CD8-positive, alpha-beta T cell (primary cell): ENCODE measurements at regions of chr4 and their contacts with region 1.

Region 1: DNA sequence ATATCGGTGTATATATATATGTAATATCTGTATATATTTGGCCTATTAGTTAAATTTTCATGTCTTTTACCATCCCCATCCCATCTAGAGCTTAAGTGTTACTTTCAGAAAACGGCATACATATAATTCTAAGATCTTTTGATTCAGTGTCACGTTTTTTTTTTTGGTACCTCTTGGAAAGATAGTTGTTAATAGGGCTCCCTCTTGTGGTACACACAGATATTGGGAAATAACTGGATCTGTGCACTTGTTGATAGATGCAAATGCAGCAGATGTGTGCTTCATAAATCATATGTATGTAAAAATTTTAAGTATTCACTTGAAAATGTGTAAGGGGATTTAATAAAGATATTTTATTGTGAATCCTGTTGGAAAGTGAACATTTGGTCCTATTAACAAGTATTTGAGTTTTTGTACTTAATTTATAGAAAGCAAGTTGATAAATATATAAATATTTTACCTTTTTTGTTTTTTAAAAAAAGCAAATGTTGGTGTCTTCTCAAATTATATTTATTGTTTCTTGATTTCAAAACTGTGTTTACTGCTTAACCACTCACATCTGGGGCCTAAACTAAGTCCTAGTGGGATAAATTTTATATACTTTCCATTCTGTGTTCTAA is 74.7 kb downstream of the PAQR3 start:
- DNase-seq: peak in 3 of 9 experiments; percentile 29 to 78 (median 68)
- ATAC-seq: peak; percentile 73
- H3K4me3 ChIP-seq: no peak overlapping the region
- H3K4me3 Mint-ChIP-seq: no peak overlapping the region
- H3K27ac ChIP-seq: no peak overlapping the region
- H3K27ac Mint-ChIP-seq: no peak overlapping the region
- H3K4me1 ChIP-seq: no peaks in the 10 kb centered on the region
- H3K4me1 Mint-ChIP-seq: peaks cover 2% of the 10 kb centered on the region
- H3K27me3 ChIP-seq: no peaks in the 10 kb centered on the region
- H3K27me3 Mint-ChIP-seq: no peaks in the 10 kb centered on the region
- CTCF ChIP-seq: peak; percentile 94

Region 2: GRCh38 chr4:78517050-78517652 is 347.4 kb before region 1 on chr4:
- CTCF ChIA-PET with region 1: no interaction called
- POLR2A ChIA-PET with region 1: no interaction called
- intact Hi-C with region 1: loop called in 1 of 2 experiments (anchors 5 kb)
- DNase-seq: peak in 1 of 9 experiments; percentile 11
- ATAC-seq: no peak
- H3K4me3 ChIP-seq: no peak overlapping the region
- H3K4me3 Mint-ChIP-seq: no peak overlapping the region
- H3K27ac ChIP-seq: no peak overlapping the region
- H3K27ac Mint-ChIP-seq: no peak overlapping the region
- H3K4me1 ChIP-seq: no peaks in the 10 kb centered on the region
- H3K4me1 Mint-ChIP-seq: no peaks in the 10 kb centered on the region
- H3K27me3 ChIP-seq: no peaks in the 10 kb centered on the region
- H3K27me3 Mint-ChIP-seq: no peaks in the 10 kb centered on the region
- CTCF ChIP-seq: no peak

Region 3: DNA sequence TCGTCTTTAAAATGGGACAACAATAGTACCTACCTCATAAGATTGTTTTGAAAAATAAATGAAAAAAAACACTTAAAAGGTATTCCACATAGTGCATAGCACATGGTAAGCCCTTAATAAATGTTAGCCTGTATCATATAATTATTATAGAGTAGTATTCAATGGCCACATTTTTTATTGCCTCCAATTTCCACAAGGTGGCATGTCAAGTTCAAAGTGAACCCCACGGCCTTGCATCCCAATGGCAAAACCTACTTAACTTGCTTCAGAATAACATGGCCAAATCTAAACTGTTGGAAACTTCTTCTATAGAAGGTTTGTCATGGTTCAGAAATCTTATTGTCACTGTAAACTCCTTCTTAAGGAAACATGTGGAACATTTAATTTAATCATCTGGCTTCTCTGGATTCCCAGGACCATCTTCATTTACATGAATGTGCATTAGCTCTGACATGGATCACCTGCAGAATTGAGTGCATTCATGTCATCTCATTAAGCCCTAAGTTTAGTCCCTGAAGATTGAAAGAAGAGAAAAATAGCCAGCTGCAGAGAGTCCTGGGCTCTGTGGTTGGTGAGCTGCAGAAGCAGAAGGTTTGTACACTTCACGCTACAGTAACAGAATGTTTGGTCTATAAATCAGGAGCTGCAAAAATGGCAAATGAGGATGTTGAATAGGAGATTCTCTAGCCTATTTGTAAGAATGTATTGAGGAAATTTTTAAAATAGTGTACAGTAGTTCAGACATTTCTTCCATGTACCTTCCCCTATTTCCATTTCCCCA is 251.9 kb before region 1 on chr4:
- CTCF ChIA-PET with region 1: interaction called, 5 read pairs
- POLR2A ChIA-PET with region 1: no interaction called
- intact Hi-C with region 1: loop called (anchors 1 to 5 kb)
- DNase-seq: peak in 2 of 9 experiments; percentile 19 to 25
- ATAC-seq: no peak
- H3K4me3 ChIP-seq: no peak overlapping the region
- H3K4me3 Mint-ChIP-seq: no peak overlapping the region
- H3K27ac ChIP-seq: no peak overlapping the region
- H3K27ac Mint-ChIP-seq: no peak overlapping the region
- H3K4me1 ChIP-seq: peaks cover 21% of the 10 kb centered on the region
- H3K4me1 Mint-ChIP-seq: peaks cover 33% of the 10 kb centered on the region
- H3K27me3 ChIP-seq: no peaks in the 10 kb centered on the region
- H3K27me3 Mint-ChIP-seq: no peaks in the 10 kb centered on the region
- CTCF ChIP-seq: no peak

Region 4: GRCh38 chr4:78767350-78767749 is 97.2 kb before region 1 on chr4:
- CTCF ChIA-PET with region 1: interaction called, 11 read pairs
- POLR2A ChIA-PET with region 1: no interaction called
- intact Hi-C with region 1: no loop called
- DNase-seq: no peak
- ATAC-seq: no peak
- H3K4me3 ChIP-seq: no peak overlapping the region
- H3K4me3 Mint-ChIP-seq: no peak overlapping the region
- H3K27ac ChIP-seq: no peak overlapping the region
- H3K27ac Mint-ChIP-seq: no peak overlapping the region
- H3K4me1 ChIP-seq: no peaks in the 10 kb centered on the region
- H3K4me1 Mint-ChIP-seq: no peaks in the 10 kb centered on the region
- H3K27me3 ChIP-seq: no peaks in the 10 kb centered on the region
- H3K27me3 Mint-ChIP-seq: peaks cover 2% of the 10 kb centered on the region
- CTCF ChIP-seq: no peak